ENCODE measurements at regions of chr1 and their contacts with region 1.

Region 1: DNA sequence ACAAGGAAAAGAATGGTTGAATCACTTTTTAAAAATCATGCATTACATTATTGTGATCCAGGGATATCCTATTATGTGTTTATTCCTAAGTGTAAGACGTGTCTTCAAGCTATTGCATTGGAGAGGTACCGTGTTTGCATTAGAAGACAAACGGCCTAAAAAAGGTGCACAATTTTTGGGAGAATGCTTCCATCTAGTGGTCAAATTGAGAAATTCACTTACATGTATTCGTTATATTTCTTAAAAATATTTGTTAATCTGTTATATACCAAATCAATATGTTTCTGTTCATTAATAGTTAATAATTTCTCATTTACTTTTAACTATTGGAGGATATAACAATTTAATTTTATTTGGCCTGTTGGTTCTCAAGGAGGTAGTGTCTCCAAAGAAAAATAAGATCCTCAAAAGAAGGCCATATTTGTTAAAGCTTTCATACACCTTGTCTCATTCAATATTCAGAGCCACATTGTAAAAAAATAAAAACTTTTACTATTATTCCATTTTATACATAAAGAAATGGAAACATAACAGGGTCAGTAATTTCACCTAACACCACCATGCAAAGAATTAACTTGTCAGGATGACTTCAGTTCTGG is 40.5 kb upstream of the KCTD3 start:
- DNase-seq: no peak
- H3K4me3 ChIP-seq: no peak overlapping the region
- H3K27ac ChIP-seq: no peak overlapping the region
- H3K4me1 ChIP-seq: no peaks in the 10 kb centered on the region
- H3K27me3 ChIP-seq: no peaks in the 10 kb centered on the region
- CTCF ChIP-seq: peak in 2 of 3 experiments; percentile 27 to 39

Region 2: GRCh38 chr1:214660862-214661261 is 865.8 kb before region 1 on chr1:
- dilution Hi-C with region 1: loop called (anchors 25 kb)
- DNase-seq: no peak
- H3K4me3 ChIP-seq: no peak overlapping the region
- H3K27ac ChIP-seq: no peak overlapping the region
- H3K4me1 ChIP-seq: no peaks in the 10 kb centered on the region
- H3K27me3 ChIP-seq: no peaks in the 10 kb centered on the region
- CTCF ChIP-seq: peak in 1 of 3 experiments; percentile 44

Region 3: DNA sequence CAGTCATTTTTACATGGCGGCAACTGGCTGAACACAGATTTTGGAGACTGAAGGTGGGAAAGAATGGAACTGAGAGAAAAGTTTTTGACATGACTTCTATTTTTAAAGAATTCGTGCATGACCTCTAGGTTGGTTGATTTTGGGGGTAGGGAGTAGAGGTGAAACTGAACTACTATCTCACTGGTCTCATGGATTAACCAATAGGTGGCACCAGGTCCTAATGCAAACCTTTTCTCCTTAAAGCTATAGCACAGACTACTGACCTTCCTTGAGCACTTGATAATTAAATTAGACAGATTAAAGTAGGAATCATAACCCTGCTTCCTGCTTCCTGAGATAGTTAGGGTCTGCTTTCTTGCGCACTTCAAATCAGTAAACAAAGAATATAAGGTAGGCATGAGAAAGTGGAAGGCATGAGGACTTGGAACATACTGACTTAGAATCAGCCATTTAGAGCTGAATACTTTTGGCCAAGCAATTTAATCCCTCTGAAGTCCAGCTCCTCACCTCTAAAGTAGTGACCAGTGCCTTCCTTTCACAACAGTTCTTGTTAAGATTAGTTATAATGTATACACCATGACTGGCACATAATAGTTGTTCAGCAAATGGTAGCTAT is 717.7 kb before region 1 on chr1:
- dilution Hi-C with region 1: loop called (anchors 25 kb)
- DNase-seq: no peak
- H3K4me3 ChIP-seq: no peak overlapping the region
- H3K27ac ChIP-seq: no peak overlapping the region
- H3K4me1 ChIP-seq: no peaks in the 10 kb centered on the region
- H3K27me3 ChIP-seq: no peaks in the 10 kb centered on the region
- CTCF ChIP-seq: peak; percentile 51 to 57 (median 55)

Region 4: GRCh38 chr1:215581896-215582295 is 55.2 kb after region 1 on chr1:
- dilution Hi-C with region 1: no loop called
- DNase-seq: no peak
- H3K4me3 ChIP-seq: no peak overlapping the region
- H3K27ac ChIP-seq: no peak overlapping the region
- H3K4me1 ChIP-seq: peaks cover 13% of the 10 kb centered on the region
- H3K27me3 ChIP-seq: no peaks in the 10 kb centered on the region
- CTCF ChIP-seq: no peak